H1 (cell line): ENCODE measurements at regions of chr1 and their contacts with region 1.

Region 1: GRCh38 chr1:110766025-110766647 is 91.4 kb upstream of the KCNA3 start:
- DNase-seq: no peak
- H3K4me3 ChIP-seq: no peak overlapping the region
- H3K27ac ChIP-seq: no peak overlapping the region
- H3K4me1 ChIP-seq: no peaks in the 10 kb centered on the region
- H3K27me3 ChIP-seq: no peaks in the 10 kb centered on the region
- CTCF ChIP-seq: peak in 2 of 3 experiments; percentile 73 to 87; a peak in 3 of 4 replicates
- EP300 ChIP-seq: no peak
- POLR2A ChIP-seq: no peak
- RAD21 ChIP-seq: peak; percentile 84 to 89

Region 2: DNA sequence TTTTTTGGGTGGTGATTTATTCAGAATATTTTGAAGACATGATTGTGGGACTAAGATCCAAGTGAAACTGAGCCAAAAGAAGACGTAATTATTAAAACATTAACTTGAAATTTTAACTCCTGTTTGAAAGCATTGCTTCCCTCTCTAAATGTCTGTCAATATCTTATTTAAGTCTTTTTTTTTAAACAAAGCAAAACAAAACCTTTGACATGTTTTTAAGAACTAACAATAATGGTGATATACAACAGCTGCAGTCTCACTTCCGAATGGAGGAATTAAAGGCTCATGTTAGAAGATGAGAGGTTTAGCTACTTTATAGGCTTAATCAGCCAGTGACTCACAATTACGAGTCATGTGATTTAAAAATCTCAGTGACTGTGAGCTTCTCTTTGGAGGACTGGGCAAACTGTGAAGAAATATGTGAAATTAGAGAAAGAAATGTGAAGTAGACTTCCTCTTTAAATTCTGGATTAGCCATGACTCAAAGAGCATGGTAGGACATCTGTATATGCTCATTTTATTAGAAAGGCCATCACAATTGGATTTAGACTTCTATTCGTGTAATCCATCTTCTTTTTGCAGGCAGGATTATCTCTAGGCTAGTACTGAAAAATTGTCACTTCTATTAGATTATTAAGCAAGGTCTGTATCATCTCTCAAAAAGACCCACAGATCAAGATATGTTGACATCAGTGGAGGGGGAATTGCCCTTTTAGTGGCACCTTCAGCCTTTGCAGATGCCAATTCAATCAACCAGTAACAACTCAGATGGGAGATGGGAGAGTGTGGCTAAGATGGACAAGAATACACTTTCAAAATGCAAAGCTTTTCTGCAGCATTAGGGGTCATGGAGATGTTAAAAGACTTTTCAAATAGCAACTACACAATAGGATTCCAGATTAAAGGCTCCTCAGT is 120.1 kb before region 1 on chr1:
- CTCF ChIA-PET with region 1: interaction called, 33 read pairs
- POLR2A ChIA-PET with region 1: no interaction called
- DNase-seq: no peak
- H3K4me3 ChIP-seq: no peak overlapping the region
- H3K27ac ChIP-seq: no peak overlapping the region
- H3K4me1 ChIP-seq: no peaks in the 10 kb centered on the region
- H3K27me3 ChIP-seq: no peaks in the 10 kb centered on the region
- CTCF ChIP-seq: no peak
- EP300 ChIP-seq: no peak
- POLR2A ChIP-seq: no peak
- RAD21 ChIP-seq: no peak

Region 3: DNA sequence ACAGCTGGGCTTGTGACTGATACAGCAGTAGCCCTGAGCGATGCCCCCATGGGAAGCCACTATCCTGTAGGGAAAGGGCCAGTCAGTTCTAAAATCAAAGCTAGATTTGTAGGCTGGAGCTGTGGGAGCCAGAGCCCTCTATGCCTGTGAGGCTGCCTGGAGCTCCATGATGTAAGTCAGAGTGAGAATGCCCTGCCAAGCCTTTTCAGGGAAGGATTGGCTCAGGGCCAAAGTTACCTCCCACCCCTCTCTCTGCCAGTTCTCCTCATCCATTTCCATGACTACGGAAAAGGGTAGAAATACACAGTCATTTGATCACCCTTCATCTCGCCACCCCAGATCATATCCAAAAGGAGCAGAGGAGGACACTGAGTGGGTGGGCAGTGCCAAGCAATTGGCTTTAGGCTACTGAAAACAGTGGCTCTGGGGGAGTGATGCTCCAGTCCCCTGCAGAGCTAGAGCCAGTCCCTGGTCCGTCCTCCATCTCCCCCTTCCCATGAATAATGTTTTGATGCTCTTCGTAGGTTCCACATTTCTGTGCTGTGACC is 31.9 kb before region 1 on chr1:
- CTCF ChIA-PET with region 1: interaction called, 12 read pairs
- POLR2A ChIA-PET with region 1: interaction called, 3 read pairs
- DNase-seq: no peak
- H3K4me3 ChIP-seq: no peak overlapping the region
- H3K27ac ChIP-seq: no peak overlapping the region
- H3K4me1 ChIP-seq: 0 out of 7 replicates have a peak, but pooled peaks cover 0 to 3% (median 0%) of the 10 kb centered on the region in 4 experiments
- H3K27me3 ChIP-seq: no peaks in the 10 kb centered on the region
- CTCF ChIP-seq: no peak
- EP300 ChIP-seq: no peak
- POLR2A ChIP-seq: no peak
- RAD21 ChIP-seq: no peak

Region 4: DNA sequence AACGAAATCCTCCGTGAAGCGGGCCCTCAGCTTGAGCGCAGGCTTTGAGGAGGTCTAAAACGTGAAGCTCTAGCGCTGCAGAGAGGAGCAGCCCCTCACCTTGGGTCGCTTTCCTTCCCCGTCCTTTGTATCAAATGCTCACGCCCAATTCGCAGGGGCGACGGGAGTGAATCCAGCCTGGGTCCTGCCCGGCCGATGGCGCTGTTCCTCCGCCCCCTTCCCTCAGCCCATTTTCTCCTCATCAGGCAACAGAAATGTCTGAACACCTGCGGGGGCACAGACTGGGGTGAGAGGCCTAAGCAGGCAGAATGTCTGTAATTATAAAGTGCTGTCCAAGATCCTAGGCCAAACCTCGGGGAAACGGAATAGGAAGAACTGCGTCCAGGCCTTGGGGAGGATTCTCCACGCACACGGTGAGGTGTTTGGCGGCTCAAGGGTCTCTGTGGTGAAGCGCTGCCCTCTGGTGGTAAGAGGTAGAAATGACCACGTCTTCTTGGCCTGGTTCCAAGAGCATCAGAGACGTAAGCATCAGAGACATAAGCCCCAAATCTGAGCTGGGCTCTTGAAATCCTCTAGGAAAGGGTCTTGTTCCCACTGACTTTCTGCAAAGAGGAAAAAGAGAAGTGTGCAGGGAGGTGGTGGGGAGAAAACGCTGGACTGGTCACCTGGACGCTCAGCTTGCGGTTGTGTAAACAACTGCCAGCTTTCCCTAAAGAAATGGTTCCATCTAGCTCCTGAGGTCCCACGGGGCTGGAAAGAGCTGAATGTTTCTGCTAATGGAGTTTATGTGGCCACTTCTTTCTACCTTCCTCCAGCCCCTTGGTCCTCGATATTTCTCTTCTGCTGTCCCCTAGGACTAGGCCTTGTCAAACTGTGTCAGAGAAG is 14.7 kb after region 1 on chr1:
- CTCF ChIA-PET with region 1: interaction called, 96 read pairs
- POLR2A ChIA-PET with region 1: no interaction called
- DNase-seq: peak; percentile 43 to 83
- H3K4me3 ChIP-seq: peak overlapping the region; percentile 11 to 61 (median 32); a peak in 7 of 8 replicates
- H3K27ac ChIP-seq: no peak overlapping the region
- H3K4me1 ChIP-seq: peaks cover 0 to 2% (median 0%) of the 10 kb centered on the region in 4 experiments; a peak in 1 of 7 replicates
- H3K27me3 ChIP-seq: peaks cover 0 to 5% (median 1%) of the 10 kb centered on the region in 4 experiments; a peak in 4 of 7 replicates
- CTCF ChIP-seq: peak; percentile 81 to 91 (median 88)
- EP300 ChIP-seq: no peak
- POLR2A ChIP-seq: no peak
- RAD21 ChIP-seq: peak; percentile 90 to 92